ENCODE measurements at regions of chr6 and their contacts with region 1.

Region 1: DNA sequence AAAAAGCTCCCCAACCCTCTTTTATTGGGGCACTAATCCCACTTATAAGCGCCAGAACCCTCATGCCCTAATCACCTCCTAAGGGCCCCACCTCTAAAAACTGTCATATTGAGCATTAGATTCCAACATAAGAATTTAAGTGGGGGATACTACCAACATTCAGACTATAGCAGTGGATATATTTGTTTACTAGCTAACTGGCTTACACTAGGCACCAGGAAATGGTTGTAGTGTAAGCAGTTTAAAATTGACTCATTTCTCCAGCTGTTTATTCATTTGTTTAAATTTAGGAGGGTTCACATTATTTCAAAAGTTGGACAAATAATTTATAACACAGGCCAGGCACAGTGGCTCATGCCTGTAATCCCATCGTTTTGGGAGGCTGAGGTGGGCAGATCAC is 22.9 kb downstream of the MTO1 start:
- DNase-seq: no peak
- H3K4me3 ChIP-seq: no peak overlapping the region
- H3K27ac ChIP-seq: no peak overlapping the region
- H3K27me3 ChIP-seq: no peaks in the 10 kb centered on the region
- CTCF ChIP-seq: no peak

Region 2: GRCh38 chr6:72411872-72412708 is 1072.3 kb before region 1 on chr6:
- CTCF ChIA-PET with region 1: no interaction called
- POLR2A ChIA-PET with region 1: no interaction called
- DNase-seq: peak; percentile 69
- H3K4me3 ChIP-seq: no peak overlapping the region
- H3K27ac ChIP-seq: no peak overlapping the region
- H3K27me3 ChIP-seq: no peaks in the 10 kb centered on the region
- CTCF ChIP-seq: peak; percentile 100

Region 3: GRCh38 chr6:73258721-73259120 is 225.7 kb before region 1 on chr6:
- CTCF ChIA-PET with region 1: no interaction called
- POLR2A ChIA-PET with region 1: no interaction called
- DNase-seq: no peak
- H3K4me3 ChIP-seq: no peak overlapping the region
- H3K27ac ChIP-seq: no peak overlapping the region
- H3K27me3 ChIP-seq: no peaks in the 10 kb centered on the region
- CTCF ChIP-seq: no peak

Region 4: DNA sequence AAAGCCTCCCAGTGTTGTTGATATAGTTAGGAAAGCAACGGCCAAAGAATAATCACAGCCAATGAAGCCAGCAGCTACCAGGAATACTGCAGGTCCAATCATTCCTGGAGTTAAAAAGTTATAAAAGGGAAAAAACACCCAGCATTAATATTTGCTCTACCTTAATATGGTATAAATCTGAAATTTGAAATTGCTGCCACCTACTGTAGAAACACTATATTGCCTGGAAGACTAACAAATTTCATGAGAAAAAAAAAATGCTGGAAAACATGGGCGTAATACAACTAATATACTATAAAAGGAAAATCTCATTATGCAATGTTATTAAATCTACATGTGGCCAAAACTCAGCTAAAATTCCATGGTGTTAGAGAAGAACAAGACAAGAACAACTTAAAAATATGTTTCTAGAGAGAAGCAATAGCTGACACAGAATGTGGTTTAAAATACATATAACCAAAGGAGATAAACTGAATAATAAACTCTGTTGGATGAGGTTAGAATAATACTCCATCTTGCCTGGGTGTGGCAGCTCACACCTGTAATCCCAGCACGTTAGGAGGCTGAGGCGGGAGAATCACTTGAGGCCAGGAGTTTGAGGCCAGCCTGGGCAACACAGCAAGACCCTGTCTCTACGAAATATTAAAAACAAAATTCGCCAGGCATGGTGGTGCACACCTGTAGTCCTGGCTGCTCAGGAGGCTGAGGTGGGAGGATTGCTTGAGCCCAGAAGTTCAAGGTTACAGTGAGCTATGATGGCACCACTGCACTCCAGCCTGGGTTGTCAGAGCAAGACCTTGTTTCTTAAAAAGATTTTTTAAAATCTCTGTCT is 126.2 kb after region 1 on chr6:
- CTCF ChIA-PET with region 1: interaction called, 14 read pairs
- POLR2A ChIA-PET with region 1: interaction called, 3 read pairs
- DNase-seq: no peak
- H3K4me3 ChIP-seq: no peak overlapping the region
- H3K27ac ChIP-seq: no peak overlapping the region
- H3K27me3 ChIP-seq: no peaks in the 10 kb centered on the region
- CTCF ChIP-seq: peak; percentile 66

Region 5: GRCh38 chr6:73624896-73625295 is 140.5 kb after region 1 on chr6:
- CTCF ChIA-PET with region 1: no interaction called
- POLR2A ChIA-PET with region 1: no interaction called
- DNase-seq: no peak
- H3K4me3 ChIP-seq: no peak overlapping the region
- H3K27ac ChIP-seq: no peak overlapping the region
- H3K27me3 ChIP-seq: no peaks in the 10 kb centered on the region
- CTCF ChIP-seq: no peak